Gastrocnemius medialis (tissue), 4 donors: ENCODE measurements at regions of chr1 and their contacts with region 1.

Region 1: GRCh38 chr1:94329986-94330385 is 88.2 kb upstream of the ABCD3 start:
- DNase-seq: no peak
- ATAC-seq: peak in 1 of 2 donors; percentile 45
- H3K4me3 ChIP-seq: no peak overlapping the region
- H3K27ac ChIP-seq: peak overlapping the region in 3 of 4 donors; percentile 18 to 42 (median 37)
- H3K4me1 ChIP-seq: peaks cover 32 to 33% of the 10 kb centered on the region in 2 donors
- H3K27me3 ChIP-seq: no peaks in the 10 kb centered on the region
- CTCF ChIP-seq: peak in 4 of 5 experiments; percentile 18 to 36 (median 25)
- POLR2A ChIP-seq: no peak

Region 2: GRCh38 chr1:94045465-94046056 is 284.4 kb before region 1 on chr1:
- in situ Hi-C with region 1: no loop called
- intact Hi-C with region 1: loop called (anchors 5 kb)
- DNase-seq: peak; percentile 70 to 83
- ATAC-seq: peak; percentile 72 to 83
- H3K4me3 ChIP-seq: peak overlapping the region in 1 of 4 donors; percentile 28
- H3K27ac ChIP-seq: peak overlapping the region; percentile 81 to 85 (median 82)
- H3K4me1 ChIP-seq: peaks cover 19 to 33% of the 10 kb centered on the region in 2 donors
- H3K27me3 ChIP-seq: no peaks in the 10 kb centered on the region
- CTCF ChIP-seq: peak; percentile 45 to 70 (median 63)
- POLR2A ChIP-seq: peak in 1 of 2 donors; percentile 11

Region 3: GRCh38 chr1:94191216-94191615 is 138.8 kb before region 1 on chr1:
- in situ Hi-C with region 1: no loop called
- intact Hi-C with region 1: loop called (anchors 10 kb)
- DNase-seq: no peak
- ATAC-seq: no peak
- H3K4me3 ChIP-seq: no peak overlapping the region
- H3K27ac ChIP-seq: no peak overlapping the region
- H3K4me1 ChIP-seq: peaks cover 20 to 28% of the 10 kb centered on the region in 2 donors
- H3K27me3 ChIP-seq: no peaks in the 10 kb centered on the region
- CTCF ChIP-seq: no peak
- POLR2A ChIP-seq: no peak

Region 4: DNA sequence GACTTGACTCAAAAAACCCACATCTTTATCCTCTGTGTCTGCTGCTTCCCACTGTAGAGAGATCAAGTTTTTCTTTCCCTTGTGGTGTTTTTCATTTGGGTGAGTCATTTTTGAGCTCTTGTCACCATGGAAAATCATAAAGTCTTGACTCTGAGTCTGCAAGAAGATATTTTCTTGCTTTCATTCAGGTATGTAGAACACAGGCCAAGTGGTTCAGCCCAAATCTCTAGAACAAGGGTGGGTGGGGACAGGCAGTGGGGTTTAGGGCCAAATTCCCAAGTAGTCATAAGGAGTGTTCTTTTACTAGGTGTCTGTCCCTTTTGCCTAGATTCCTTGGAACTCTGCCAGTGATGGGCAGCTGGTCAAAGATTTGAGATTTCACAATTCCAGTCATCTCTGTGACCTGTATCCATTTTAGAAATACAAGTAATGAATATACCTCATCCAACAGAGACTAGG is 71.1 kb before region 1 on chr1:
- in situ Hi-C with region 1: loop called in 1 of 4 experiments (anchors 10 kb)
- intact Hi-C with region 1: no loop called
- DNase-seq: peak; percentile 44 to 82
- ATAC-seq: peak; percentile 85 to 91
- H3K4me3 ChIP-seq: no peak overlapping the region
- H3K27ac ChIP-seq: peak overlapping the region; percentile 29 to 61 (median 56)
- H3K4me1 ChIP-seq: peaks cover 8 to 20% of the 10 kb centered on the region in 2 donors
- H3K27me3 ChIP-seq: no peaks in the 10 kb centered on the region
- CTCF ChIP-seq: no peak
- POLR2A ChIP-seq: no peak